B cell (primary cell): ENCODE measurements at regions of chr1 and their contacts with region 1.

Region 1: GRCh38 chr1:3772027-3772714 is 378 bp upstream of the SMIM1 start:
- DNase-seq: peak; percentile 91
- ATAC-seq: peak; percentile 89
- H3K4me3 ChIP-seq: peak overlapping the region in 4 of 5 experiments; percentile 53 to 75 (median 68)
- H3K4me3 Mint-ChIP-seq: peak overlapping the region; percentile 84
- H3K27ac ChIP-seq: peak overlapping the region; percentile 33 to 55
- H3K27ac Mint-ChIP-seq: no peak overlapping the region
- H3K4me1 ChIP-seq: peaks cover 19 to 33% of the 10 kb centered on the region in 2 donors
- H3K4me1 Mint-ChIP-seq: peaks cover 23% of the 10 kb centered on the region
- H3K27me3 ChIP-seq: no peaks in the 10 kb centered on the region
- H3K27me3 Mint-ChIP-seq: peaks cover 6% of the 10 kb centered on the region
- CTCF ChIP-seq: no peak

Region 2: GRCh38 chr1:3530926-3531818 is 241.0 kb before region 1 on chr1:
- CTCF ChIA-PET with region 1: no interaction called
- POLR2A ChIA-PET with region 1: no interaction called
- intact Hi-C with region 1: loop called (anchors 2 kb)
- DNase-seq: peak; percentile 84
- ATAC-seq: peak; percentile 81
- H3K4me3 ChIP-seq: peak overlapping the region; percentile 45 to 74 (median 61)
- H3K4me3 Mint-ChIP-seq: peak overlapping the region; percentile 86
- H3K27ac ChIP-seq: peak overlapping the region; percentile 52 to 71
- H3K27ac Mint-ChIP-seq: peak overlapping the region; percentile 85
- H3K4me1 ChIP-seq: peaks cover 9 to 14% of the 10 kb centered on the region in 2 donors
- H3K4me1 Mint-ChIP-seq: peaks cover 17% of the 10 kb centered on the region
- H3K27me3 ChIP-seq: no peaks in the 10 kb centered on the region
- H3K27me3 Mint-ChIP-seq: no peaks in the 10 kb centered on the region
- CTCF ChIP-seq: no peak

Region 3: GRCh38 chr1:3746830-3747521 is 25.2 kb before region 1 on chr1:
- CTCF ChIA-PET with region 1: no interaction called
- POLR2A ChIA-PET with region 1: no interaction called
- intact Hi-C with region 1: loop called (anchors 1 kb)
- DNase-seq: peak; percentile 84
- ATAC-seq: peak; percentile 99
- H3K4me3 ChIP-seq: peak overlapping the region; percentile 34 to 74 (median 71)
- H3K4me3 Mint-ChIP-seq: peak overlapping the region; percentile 90
- H3K27ac ChIP-seq: peak overlapping the region in 1 of 2 donors; percentile 72
- H3K27ac Mint-ChIP-seq: peak overlapping the region; percentile 78
- H3K4me1 ChIP-seq: peaks cover 9 to 18% of the 10 kb centered on the region in 2 donors
- H3K4me1 Mint-ChIP-seq: peaks cover 27% of the 10 kb centered on the region
- H3K27me3 ChIP-seq: peaks cover 0 to under 1% (median 0%) of the 10 kb centered on the region in 4 experiments
- H3K27me3 Mint-ChIP-seq: peaks cover 5% of the 10 kb centered on the region
- CTCF ChIP-seq: no peak

Region 4: GRCh38 chr1:3856908-3857790 is 85.0 kb after region 1 on chr1 and contains the starts of genes CEP104 and DFFB:
- CTCF ChIA-PET with region 1: no interaction called
- POLR2A ChIA-PET with region 1: no interaction called
- intact Hi-C with region 1: loop called (anchors 1 kb)
- DNase-seq: peak; percentile 99
- ATAC-seq: peak; percentile 97
- H3K4me3 ChIP-seq: peak within 1 kb of the TSS; percentile 59 to 92 (median 85)
- H3K4me3 Mint-ChIP-seq: peak within 1 kb of the TSS; percentile 98
- H3K27ac ChIP-seq: peak within 1 kb of the TSS; percentile 59 to 68
- H3K27ac Mint-ChIP-seq: peak within 1 kb of the TSS; percentile 93
- H3K4me1 ChIP-seq: peaks cover 20 to 24% of the 10 kb centered on the region in 2 donors
- H3K4me1 Mint-ChIP-seq: peaks cover 31% of the 10 kb centered on the region
- H3K27me3 ChIP-seq: no peaks in the 10 kb centered on the region
- H3K27me3 Mint-ChIP-seq: no peaks in the 10 kb centered on the region
- CTCF ChIP-seq: peak; percentile 46
- total RNA-seq, gene CEP104: 71.8 and 76.2 TPM in 2 replicates
- total RNA-seq, gene DFFB: 17.4 and 20.7 TPM in 2 replicates